ENCODE measurements at regions of chr11 and their contacts with region 1.

Region 1: DNA sequence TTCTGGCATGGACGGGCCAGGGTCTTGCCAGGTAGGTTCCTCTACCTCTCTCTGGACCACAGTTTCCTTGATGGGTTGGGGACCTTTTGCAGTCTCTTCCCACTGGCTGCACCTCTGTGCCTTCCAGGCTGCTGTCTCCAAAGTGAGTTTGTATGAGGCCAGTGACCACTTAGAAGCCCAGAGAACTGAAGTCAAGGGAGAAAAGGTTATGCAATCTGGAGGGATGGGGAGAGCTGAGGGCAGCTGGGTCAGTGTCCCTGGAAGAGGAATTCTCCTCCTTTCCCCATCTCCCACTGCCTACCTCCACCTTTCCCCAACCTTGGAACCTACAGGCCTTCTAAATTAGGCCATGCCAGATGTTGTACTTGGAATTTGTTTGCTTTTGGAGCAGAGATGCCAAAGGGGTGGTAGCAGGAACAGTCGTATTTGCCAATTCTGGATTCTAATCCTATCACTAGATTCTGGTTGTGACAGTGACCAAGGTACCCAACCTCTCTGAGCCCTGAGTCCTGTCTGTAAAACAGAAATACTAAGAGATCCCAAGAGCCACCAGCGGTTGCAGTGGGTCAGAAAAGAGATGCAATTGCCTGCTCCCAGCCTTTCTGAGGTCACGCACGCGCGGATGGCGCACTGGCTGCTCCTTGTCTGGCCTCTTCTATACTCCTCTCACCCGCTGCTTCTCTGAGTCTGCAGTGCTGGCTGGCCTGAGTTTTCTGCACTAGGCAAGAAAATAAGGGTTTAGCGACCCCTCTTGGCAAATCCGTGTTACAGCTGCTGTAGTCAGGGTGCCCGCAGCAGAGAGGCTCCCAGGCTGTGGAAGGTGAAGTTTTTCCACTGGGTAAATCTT is 10.7 kb upstream of the ACCSL start:
- DNase-seq: peak; percentile 64 to 95
- H3K4me3 ChIP-seq: no peak overlapping the region
- H3K27ac ChIP-seq: peak overlapping the region; percentile 92 to 96
- H3K4me1 ChIP-seq: peaks cover 14 to 25% of the 10 kb centered on the region in 2 donors
- H3K27me3 ChIP-seq: no peaks in the 10 kb centered on the region
- CTCF ChIP-seq: peak; percentile 84 to 92 (median 88)

Region 2: GRCh38 chr11:43895601-43896000 is 141.4 kb before region 1 on chr11:
- intact Hi-C with region 1: loop called (anchors 1 kb)
- DNase-seq: no peak
- H3K4me3 ChIP-seq: no peak overlapping the region
- H3K27ac ChIP-seq: peak overlapping the region; percentile 41 to 42
- H3K4me1 ChIP-seq: no peaks in the 10 kb centered on the region
- H3K27me3 ChIP-seq: no peaks in the 10 kb centered on the region
- CTCF ChIP-seq: no peak

Region 3: GRCh38 chr11:43937434-43938411 is 99.3 kb before region 1 on chr11:
- intact Hi-C with region 1: no loop called
- DNase-seq: no peak
- H3K4me3 ChIP-seq: no peak overlapping the region
- H3K27ac ChIP-seq: peak overlapping the region; percentile 81 to 82
- H3K4me1 ChIP-seq: peaks cover 0 to 36% of the 10 kb centered on the region in 2 donors
- H3K27me3 ChIP-seq: no peaks in the 10 kb centered on the region
- CTCF ChIP-seq: peak in 2 of 3 experiments; percentile 10 to 11

Region 4: GRCh38 chr11:43987384-43988039 is 49.5 kb before region 1 on chr11:
- intact Hi-C with region 1: loop called (anchors 2 kb)
- DNase-seq: peak; percentile 54 to 94
- H3K4me3 ChIP-seq: peak overlapping the region in 1 of 2 donors; percentile 12
- H3K27ac ChIP-seq: peak overlapping the region; percentile 77 to 83
- H3K4me1 ChIP-seq: peaks cover 9 to 32% of the 10 kb centered on the region in 2 donors
- H3K27me3 ChIP-seq: no peaks in the 10 kb centered on the region
- CTCF ChIP-seq: no peak

Region 5: GRCh38 chr11:44556735-44557409 is 519.8 kb after region 1 on chr11:
- intact Hi-C with region 1: no loop called
- DNase-seq: peak in 1 of 2 donors; percentile 80
- H3K4me3 ChIP-seq: no peak overlapping the region
- H3K27ac ChIP-seq: no peak overlapping the region
- H3K4me1 ChIP-seq: peaks cover 0 to 2% of the 10 kb centered on the region in 2 donors
- H3K27me3 ChIP-seq: no peaks in the 10 kb centered on the region
- CTCF ChIP-seq: peak; percentile 76 to 87 (median 83)